Activated B cell treated with CpG ODN at 0.5 μM for 24 hours (primary cell): ENCODE measurements at regions of chrX and their contacts with region 1.

Region 1: GRCh38 chrX:140918407-140919038 is 83.9 kb upstream of the SPANXB1 start:
- DNase-seq: no peak
- ATAC-seq: peak; percentile 50
- H3K4me3 Mint-ChIP-seq: no peak overlapping the region
- H3K27ac Mint-ChIP-seq: no peak overlapping the region
- H3K4me1 Mint-ChIP-seq: peaks cover 5% of the 10 kb centered on the region
- H3K27me3 Mint-ChIP-seq: no peaks in the 10 kb centered on the region
- CTCF ChIP-seq: no peak

Region 2: GRCh38 chrX:139759637-139760036 is 1158.9 kb before region 1 on chrX:
- CTCF ChIA-PET with region 1: no interaction called
- POLR2A ChIA-PET with region 1: no interaction called
- intact Hi-C with region 1: no loop called
- DNase-seq: no peak
- ATAC-seq: no peak
- H3K4me3 Mint-ChIP-seq: no peak overlapping the region
- H3K27ac Mint-ChIP-seq: no peak overlapping the region
- H3K4me1 Mint-ChIP-seq: no peaks in the 10 kb centered on the region
- H3K27me3 Mint-ChIP-seq: no peaks in the 10 kb centered on the region
- CTCF ChIP-seq: no peak

Region 3: DNA sequence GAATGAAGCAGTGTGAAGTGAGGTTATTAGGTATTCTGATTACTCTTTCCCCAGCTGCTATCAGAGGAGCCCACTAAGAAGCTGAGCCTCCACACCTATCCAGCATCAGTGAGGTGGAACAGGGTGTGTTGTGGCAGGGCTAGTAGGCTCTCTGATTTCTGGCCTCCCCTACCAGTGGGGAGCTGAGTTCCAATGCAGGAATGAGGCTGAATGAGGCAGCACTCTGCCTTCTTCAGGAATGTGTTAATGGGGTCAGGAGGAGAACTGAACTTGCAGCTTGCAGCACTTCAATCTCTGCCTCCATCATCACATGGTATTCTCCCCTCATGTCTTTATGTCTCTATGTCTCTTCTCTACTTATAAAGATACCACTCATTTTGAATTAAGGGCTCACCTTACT is 440.5 kb before region 1 on chrX:
- CTCF ChIA-PET with region 1: no interaction called
- POLR2A ChIA-PET with region 1: no interaction called
- intact Hi-C with region 1: no loop called
- DNase-seq: no peak
- ATAC-seq: no peak
- H3K4me3 Mint-ChIP-seq: no peak overlapping the region
- H3K27ac Mint-ChIP-seq: no peak overlapping the region
- H3K4me1 Mint-ChIP-seq: no peaks in the 10 kb centered on the region
- H3K27me3 Mint-ChIP-seq: no peaks in the 10 kb centered on the region
- CTCF ChIP-seq: no peak

Region 4: GRCh38 chrX:141176586-141177451 is 258.3 kb after region 1 on chrX and contains the start of gene LDOC1:
- CTCF ChIA-PET with region 1: no interaction called
- POLR2A ChIA-PET with region 1: no interaction called
- intact Hi-C with region 1: loop called (anchors 10 kb)
- DNase-seq: peak; percentile 60
- ATAC-seq: peak; percentile 96
- H3K4me3 Mint-ChIP-seq: peak within 1 kb of the TSS; percentile 82
- H3K27ac Mint-ChIP-seq: peak within 1 kb of the TSS; percentile 50
- H3K4me1 Mint-ChIP-seq: peaks cover 11% of the 10 kb centered on the region
- H3K27me3 Mint-ChIP-seq: no peaks in the 10 kb centered on the region
- CTCF ChIP-seq: no peak
- total RNA-seq, gene LDOC1: 4.2 and 5.5 TPM in 2 replicates